Heart right ventricle (tissue), 16 donors: ENCODE measurements at regions of chr15 and their contacts with region 1.

Region 1: DNA sequence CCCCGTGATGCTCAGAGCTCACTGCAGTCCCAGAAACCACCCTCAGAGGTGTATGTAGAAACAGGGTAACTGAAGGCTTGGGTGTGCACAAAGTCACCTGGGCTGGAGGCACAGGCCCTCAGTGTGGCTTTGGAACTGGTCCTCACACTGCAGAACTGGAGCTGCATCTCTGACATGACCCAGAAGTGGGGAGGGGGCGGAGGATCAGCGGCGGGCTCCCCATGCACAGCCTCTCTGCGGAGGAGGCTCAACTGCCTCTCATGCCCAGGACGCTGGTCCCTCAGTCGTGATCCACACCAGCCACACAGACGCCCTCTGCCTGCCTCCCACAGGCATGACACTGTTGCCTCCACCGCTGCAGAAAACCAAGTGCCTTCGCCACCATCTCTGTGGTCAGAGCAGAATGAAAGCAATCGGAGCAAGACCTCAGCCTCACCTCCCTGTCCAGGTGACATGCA is 73.7 kb downstream of the TM2D3 start:
- DNase-seq: peak in 1 of 2 donors; percentile 45
- ATAC-seq: peak in 7 of 8 donors; percentile 18 to 81 (median 50)
- H3K4me3 ChIP-seq: no peak overlapping the region
- H3K27ac ChIP-seq: no peak overlapping the region
- H3K4me1 ChIP-seq: peaks cover 0 to 6% (median 0%) of the 10 kb centered on the region in 9 donors
- H3K27me3 ChIP-seq: no peaks in the 10 kb centered on the region
- CTCF ChIP-seq: peak; percentile 15 to 56 (median 48)

Region 2: DNA sequence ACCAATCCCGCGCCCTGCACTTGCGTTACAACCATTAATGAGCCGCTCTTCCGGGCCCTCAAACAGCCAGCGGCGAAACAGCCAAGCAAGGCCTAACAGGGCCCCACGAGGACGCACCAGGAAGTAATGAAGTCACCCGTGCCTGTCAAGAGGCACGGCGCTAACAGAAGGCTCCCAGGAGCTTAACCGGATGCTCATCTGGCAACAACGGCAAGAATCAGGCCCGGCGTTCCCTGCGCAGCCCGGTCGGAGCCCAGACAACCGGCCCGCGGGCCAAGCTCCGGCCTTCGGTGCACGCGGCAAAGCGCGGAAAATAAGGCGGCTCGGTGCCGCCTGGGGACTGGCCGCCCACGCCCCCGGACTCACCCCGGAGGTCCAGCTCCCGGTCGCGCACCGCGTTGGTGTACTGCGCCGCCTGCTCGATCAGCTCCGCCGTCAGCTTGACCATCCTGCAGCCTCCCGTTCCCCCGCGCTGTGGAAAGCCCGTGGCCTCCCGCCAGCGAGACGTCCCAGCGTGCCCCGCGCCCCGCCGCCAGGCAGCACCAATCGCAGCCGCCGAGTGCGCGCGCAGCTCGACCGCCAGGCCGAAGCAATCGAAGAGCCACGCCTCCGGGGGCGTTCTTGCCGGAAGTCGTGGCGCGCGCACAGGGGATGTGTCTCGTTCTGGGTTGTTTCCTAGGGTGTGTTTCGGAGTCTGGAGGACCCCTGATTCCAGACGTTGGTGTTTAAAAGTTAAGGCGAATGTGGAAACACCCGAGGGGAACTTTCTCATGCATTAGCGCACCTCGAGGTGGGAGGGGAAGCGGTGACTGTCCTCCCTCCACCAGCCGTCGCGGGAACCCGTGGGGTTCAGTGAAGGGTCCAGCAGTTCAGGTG is 283.5 kb before region 1 on chr15 and contains the start of gene SNRPA1:
- intact Hi-C with region 1: loop called in 2 of 10 experiments (anchors 5 kb)
- DNase-seq: peak; percentile 97 to 99
- ATAC-seq: peak; percentile 93 to 96 (median 94)
- H3K4me3 ChIP-seq: peak within 1 kb of the TSS; percentile 58 to 99 (median 91)
- H3K27ac ChIP-seq: peak within 1 kb of the TSS; percentile 90 to 99 (median 96)
- H3K4me1 ChIP-seq: peaks cover 0 to 43% (median 34%) of the 10 kb centered on the region in 9 donors
- H3K27me3 ChIP-seq: no peaks in the 10 kb centered on the region
- CTCF ChIP-seq: no peak
- total RNA-seq, gene SNRPA1: 23.8 to 36.3 (median 29.9) TPM

Region 3: DNA sequence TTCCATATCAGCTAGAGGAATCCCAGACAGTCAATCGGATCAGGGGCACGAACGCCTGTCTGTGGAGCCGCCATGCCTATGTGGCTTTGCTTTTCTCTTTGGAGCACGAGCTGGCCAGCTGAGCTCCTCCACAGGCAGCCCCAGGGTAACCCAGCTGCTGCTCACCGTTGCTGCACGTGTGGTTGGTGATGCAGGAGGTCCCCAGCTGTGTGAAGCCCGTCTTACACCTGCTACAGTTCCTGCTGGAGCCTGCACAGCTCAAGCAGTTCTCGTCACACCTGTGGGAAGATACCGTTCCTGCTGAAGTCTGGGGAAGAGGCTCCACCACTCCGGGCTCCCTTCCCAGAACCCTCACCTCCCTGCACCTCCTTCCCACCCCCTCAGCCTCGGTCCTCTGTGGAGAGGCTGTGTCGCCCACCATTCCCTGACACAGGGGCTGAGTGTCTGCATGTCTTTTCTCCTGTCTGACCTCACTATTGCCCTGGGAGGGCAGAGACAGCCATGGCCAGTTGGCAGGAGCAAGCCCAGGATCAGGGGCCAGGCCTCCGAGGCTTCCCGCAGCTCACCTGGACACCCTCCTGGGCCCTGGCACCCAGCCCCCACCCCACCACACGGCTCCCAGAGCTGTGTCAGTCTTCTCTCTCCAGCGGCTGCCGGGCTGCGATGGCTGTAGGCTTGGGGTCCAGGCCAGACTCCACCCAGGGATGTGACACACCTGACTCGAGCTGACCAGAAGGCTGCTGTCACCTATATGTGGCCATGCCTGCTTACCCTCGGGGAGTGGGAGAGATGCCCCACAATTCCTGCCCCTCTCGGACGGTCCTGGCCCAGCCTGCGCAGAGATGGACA is 271.2 kb before region 1 on chr15:
- intact Hi-C with region 1: loop called in 1 of 10 experiments (anchors 5 kb)
- DNase-seq: no peak
- ATAC-seq: peak in 2 of 8 donors; percentile 23 to 24
- H3K4me3 ChIP-seq: no peak overlapping the region
- H3K27ac ChIP-seq: no peak overlapping the region
- H3K4me1 ChIP-seq: no peaks in the 10 kb centered on the region
- H3K27me3 ChIP-seq: no peaks in the 10 kb centered on the region
- CTCF ChIP-seq: no peak

Region 4: GRCh38 chr15:101358895-101359294 is 219.6 kb before region 1 on chr15:
- intact Hi-C with region 1: loop called in 1 of 10 experiments (anchors 2 kb)
- DNase-seq: peak; percentile 22 to 53
- ATAC-seq: peak; percentile 43 to 91 (median 82)
- H3K4me3 ChIP-seq: no peak overlapping the region
- H3K27ac ChIP-seq: peak overlapping the region in 5 of 10 donors; percentile 42 to 71 (median 58)
- H3K4me1 ChIP-seq: peaks cover 0 to 23% (median 15%) of the 10 kb centered on the region in 9 donors
- H3K27me3 ChIP-seq: no peaks in the 10 kb centered on the region
- CTCF ChIP-seq: no peak

Region 5: DNA sequence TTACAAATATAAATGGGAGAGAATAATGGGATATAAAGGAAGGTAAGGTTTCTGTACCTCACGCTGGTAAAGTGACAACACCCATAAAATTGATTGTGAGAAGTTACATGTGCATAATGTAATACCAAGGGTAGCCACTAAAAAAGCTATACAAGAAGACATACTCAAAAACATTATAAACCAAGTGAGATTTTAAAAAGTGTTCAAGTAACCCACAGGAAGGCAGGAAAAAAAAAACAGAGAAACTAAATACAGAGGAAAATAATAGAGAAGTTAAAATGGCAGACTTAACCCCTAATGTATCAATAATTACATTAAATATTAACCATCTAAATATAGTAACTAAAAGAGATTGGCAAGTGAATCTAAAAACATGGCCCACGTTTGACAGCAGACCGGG is 165.2 kb before region 1 on chr15:
- intact Hi-C with region 1: no loop called
- DNase-seq: no peak
- ATAC-seq: no peak
- H3K4me3 ChIP-seq: no peak overlapping the region
- H3K27ac ChIP-seq: no peak overlapping the region
- H3K4me1 ChIP-seq: no peaks in the 10 kb centered on the region
- H3K27me3 ChIP-seq: no peaks in the 10 kb centered on the region
- CTCF ChIP-seq: peak in 2 of 9 donors; percentile 13 to 19